ENCODE measurements at regions of chr11 and their contacts with region 1.

Region 1: GRCh38 chr11:45339729-45340519 is 53.8 kb upstream of the SYT13 start:
- DNase-seq: peak; percentile 81 to 96 (median 92)
- ATAC-seq: peak; percentile 100
- H3K4me3 ChIP-seq: peak overlapping the region in 1 of 2 experiments; percentile 27
- H3K4me3 Mint-ChIP-seq: peak overlapping the region; percentile 60
- H3K27ac ChIP-seq: no peak overlapping the region
- H3K27ac Mint-ChIP-seq: no peak overlapping the region
- H3K4me1 ChIP-seq: peaks cover 8% of the 10 kb centered on the region
- H3K4me1 Mint-ChIP-seq: peaks cover 10% of the 10 kb centered on the region
- H3K27me3 ChIP-seq: peaks cover 0 to 4% of the 10 kb centered on the region in 2 experiments
- H3K27me3 Mint-ChIP-seq: peaks cover 10% of the 10 kb centered on the region
- CTCF ChIP-seq: peak; percentile 87

Region 2: DNA sequence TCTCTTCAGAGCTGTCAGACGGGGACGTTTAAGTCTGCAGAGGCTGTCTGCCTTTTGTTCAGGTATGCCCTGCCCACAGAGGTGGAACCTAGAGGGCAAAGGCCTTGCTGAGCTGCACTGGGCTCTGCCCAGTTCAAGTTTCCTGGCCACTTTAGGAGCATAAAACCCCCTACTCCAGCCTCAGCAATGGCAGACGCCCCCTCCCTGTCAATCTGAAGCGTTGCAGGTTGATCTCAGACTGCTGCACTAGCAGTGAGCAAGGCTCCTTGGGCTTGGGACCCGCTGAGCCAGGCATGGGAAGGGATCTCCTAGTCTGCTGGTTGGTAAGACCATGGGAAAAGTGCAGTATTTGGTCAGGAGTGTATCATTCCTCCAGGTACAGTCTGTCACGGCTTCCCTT is 322.6 kb before region 1 on chr11:
- CTCF ChIA-PET with region 1: no interaction called
- POLR2A ChIA-PET with region 1: no interaction called
- intact Hi-C with region 1: no loop called
- DNase-seq: no peak
- ATAC-seq: no peak
- H3K4me3 ChIP-seq: no peak overlapping the region
- H3K4me3 Mint-ChIP-seq: no peak overlapping the region
- H3K27ac ChIP-seq: no peak overlapping the region
- H3K27ac Mint-ChIP-seq: no peak overlapping the region
- H3K4me1 ChIP-seq: no peaks in the 10 kb centered on the region
- H3K4me1 Mint-ChIP-seq: peaks cover 8% of the 10 kb centered on the region
- H3K27me3 ChIP-seq: peaks cover 0 to 2% of the 10 kb centered on the region in 2 experiments
- H3K27me3 Mint-ChIP-seq: peaks cover 14% of the 10 kb centered on the region
- CTCF ChIP-seq: no peak

Region 3: DNA sequence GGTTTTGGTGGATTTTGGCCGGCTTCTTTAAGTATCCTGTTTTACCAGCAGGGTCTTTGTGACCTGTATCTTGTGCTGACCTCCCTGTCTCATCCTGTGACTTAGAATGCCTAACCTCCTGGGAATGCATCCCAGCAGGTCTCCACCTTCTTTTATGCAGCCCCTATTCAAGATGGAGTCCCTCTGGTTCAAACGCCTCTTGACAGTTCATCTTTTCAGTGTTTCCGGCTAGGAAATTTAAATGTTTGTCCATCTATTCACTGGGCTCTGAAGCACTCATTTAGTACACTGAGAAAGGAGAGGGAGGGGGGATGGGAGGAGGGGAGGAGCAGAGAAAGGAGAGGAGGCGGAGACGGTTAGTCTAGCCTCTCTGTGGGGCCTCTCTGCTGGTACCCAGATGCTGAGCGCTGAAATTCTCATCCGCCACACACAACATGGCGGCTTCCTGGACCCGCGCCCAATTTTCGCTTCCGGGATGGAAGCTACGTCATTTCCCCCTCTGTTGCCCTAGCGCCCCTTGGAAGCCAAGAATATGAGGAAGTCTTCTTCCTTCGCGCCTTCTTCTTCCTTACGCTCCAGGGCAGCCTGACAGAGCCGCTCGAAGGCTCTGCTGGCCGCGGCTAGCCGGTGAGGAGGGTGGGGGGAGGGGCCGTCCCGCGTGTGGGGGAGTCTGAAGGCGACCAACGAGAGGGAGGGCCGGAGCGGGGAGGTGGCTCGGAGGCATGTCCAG is 15.2 kb after region 1 on chr11:
- CTCF ChIA-PET with region 1: interaction called, 30 read pairs
- POLR2A ChIA-PET with region 1: no interaction called
- intact Hi-C with region 1: loop called (anchors 1 kb)
- DNase-seq: peak; percentile 80 to 95 (median 89)
- ATAC-seq: peak; percentile 96
- H3K4me3 ChIP-seq: peak overlapping the region; percentile 66 to 72
- H3K4me3 Mint-ChIP-seq: peak overlapping the region; percentile 80
- H3K27ac ChIP-seq: peak overlapping the region; percentile 48 to 68
- H3K27ac Mint-ChIP-seq: peak overlapping the region; percentile 80
- H3K4me1 ChIP-seq: peaks cover 13% of the 10 kb centered on the region
- H3K4me1 Mint-ChIP-seq: peaks cover 14% of the 10 kb centered on the region
- H3K27me3 ChIP-seq: no peaks in the 10 kb centered on the region
- H3K27me3 Mint-ChIP-seq: peaks cover 5% of the 10 kb centered on the region
- CTCF ChIP-seq: no peak

Measured in CD8-positive, alpha-beta T cell (primary cell).